ENCODE measurements at regions of chr2 and their contacts with region 1.

Region 1: DNA sequence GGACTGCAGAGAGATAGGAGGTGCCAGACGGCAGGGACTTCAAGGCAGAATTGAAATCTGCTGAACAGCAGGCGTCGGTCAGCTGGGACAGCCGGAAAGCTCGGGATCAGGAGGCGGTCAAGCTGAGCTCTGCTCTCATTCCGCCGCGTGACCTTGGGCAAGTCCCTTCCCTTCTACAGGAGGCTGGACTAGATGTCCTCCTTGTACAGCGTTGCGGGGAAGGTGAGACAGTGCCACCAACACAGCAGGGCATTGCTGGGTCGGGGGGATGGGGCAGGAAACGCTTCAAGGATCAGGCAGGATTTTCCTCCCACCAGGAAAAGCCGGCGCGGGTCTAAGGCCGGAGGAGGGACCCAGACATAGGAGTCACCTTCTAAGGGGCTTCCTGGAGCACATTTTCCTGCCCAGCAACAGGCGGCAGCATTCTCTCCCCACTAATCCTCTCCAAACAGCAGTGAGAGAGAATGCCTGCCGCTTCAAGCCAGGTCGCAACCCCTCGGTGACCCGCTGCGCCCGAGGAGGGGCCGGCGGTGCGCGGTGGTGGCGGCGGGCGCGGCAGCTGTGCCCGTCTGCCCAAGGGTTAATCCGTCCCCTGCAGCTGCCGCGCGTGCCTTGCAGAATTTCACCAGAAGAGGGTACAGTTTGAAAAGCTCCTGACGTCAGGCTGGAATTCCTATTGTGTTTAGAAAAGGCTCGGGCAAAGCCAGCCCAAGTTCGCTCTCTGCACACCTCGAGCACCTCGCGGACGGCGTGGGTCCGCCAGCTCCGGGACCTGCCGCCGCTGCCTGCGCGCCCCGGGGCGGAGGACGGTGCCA is at the start of gene KCNF1:
- DNase-seq: peak; percentile 59
- H3K4me3 ChIP-seq: peak within 1 kb of the TSS; percentile 21 to 48 (median 42)
- H3K27ac ChIP-seq: peak within 1 kb of the TSS in 1 of 4 donors; percentile 57
- H3K4me1 ChIP-seq: peaks cover 0 to 15% (median 6%) of the 10 kb centered on the region in 4 donors
- H3K27me3 ChIP-seq: peaks cover 4 to 29% (median 16%) of the 10 kb centered on the region in 3 donors
- CTCF ChIP-seq: no peak
- EP300 ChIP-seq: no peak
- POLR2A ChIP-seq: no peak
- total RNA-seq, gene KCNF1: 0.16 to 1.4 (median 0.94) TPM

Region 2: GRCh38 chr2:11124503-11125068 is 213.1 kb after region 1 on chr2:
- intact Hi-C with region 1: loop called (anchors 10 kb)
- DNase-seq: no peak
- H3K4me3 ChIP-seq: no peak overlapping the region
- H3K27ac ChIP-seq: no peak overlapping the region
- H3K4me1 ChIP-seq: peaks cover 0 to 2% (median under 1%) of the 10 kb centered on the region in 4 donors
- H3K27me3 ChIP-seq: no peaks in the 10 kb centered on the region
- CTCF ChIP-seq: peak; percentile 30 to 70 (median 62)
- EP300 ChIP-seq: no peak
- POLR2A ChIP-seq: no peak

Measured in sigmoid colon (tissue), 7 donors.